ENCODE measurements at regions of chr2 and their contacts with region 1.

Region 1: DNA sequence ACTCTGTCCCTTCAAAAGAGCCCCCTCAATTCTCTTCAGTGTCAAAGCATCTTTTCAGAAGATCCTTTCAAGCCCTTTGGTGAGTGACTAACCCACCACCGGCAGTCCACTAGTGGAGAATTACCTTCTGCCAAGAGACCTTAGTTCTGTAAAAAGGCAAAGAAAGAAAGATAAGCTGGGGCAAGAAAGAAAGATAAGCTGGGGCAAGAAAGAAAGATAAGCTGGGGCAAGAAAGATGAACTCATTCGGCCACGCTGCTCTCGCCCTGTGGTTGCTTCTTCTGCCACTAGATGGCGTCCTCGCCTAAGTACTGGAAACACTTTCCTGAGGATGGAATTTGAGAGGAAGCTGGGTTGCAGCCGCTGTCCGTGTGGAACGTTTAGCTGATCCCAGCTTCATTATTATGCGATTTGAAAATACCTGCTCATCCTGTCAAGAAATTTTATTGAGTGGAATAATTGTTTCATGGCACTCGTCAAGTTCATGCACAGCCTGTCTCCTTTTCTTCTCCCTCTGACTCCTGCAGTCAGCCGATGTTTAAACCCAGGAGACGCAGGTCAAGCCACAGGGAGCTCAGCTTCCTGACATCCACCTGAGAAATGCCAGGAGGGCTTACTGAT is 17.3 kb upstream of the ANXA4 start:
- DNase-seq: peak; percentile 83
- H3K4me3 ChIP-seq: peak overlapping the region; percentile 18
- H3K27ac ChIP-seq: no peak overlapping the region
- H3K4me1 ChIP-seq: no peaks in the 10 kb centered on the region
- H3K27me3 ChIP-seq: no peaks in the 10 kb centered on the region
- CTCF ChIP-seq: peak; percentile 88

Region 2: GRCh38 chr2:69741619-69742466 is 17.2 kb after region 1 on chr2 and contains the start of gene ANXA4:
- CTCF ChIA-PET with region 1: interaction called, 11 read pairs
- POLR2A ChIA-PET with region 1: no interaction called
- intact Hi-C with region 1: no loop called
- DNase-seq: peak; percentile 56
- H3K4me3 ChIP-seq: peak within 1 kb of the TSS; percentile 54
- H3K27ac ChIP-seq: peak within 1 kb of the TSS; percentile 51
- H3K4me1 ChIP-seq: peaks cover 3% of the 10 kb centered on the region
- H3K27me3 ChIP-seq: no peaks in the 10 kb centered on the region
- CTCF ChIP-seq: no peak
- total RNA-seq, gene ANXA4: 5.1 and 6.5 TPM in 2 replicates

Region 3: DNA sequence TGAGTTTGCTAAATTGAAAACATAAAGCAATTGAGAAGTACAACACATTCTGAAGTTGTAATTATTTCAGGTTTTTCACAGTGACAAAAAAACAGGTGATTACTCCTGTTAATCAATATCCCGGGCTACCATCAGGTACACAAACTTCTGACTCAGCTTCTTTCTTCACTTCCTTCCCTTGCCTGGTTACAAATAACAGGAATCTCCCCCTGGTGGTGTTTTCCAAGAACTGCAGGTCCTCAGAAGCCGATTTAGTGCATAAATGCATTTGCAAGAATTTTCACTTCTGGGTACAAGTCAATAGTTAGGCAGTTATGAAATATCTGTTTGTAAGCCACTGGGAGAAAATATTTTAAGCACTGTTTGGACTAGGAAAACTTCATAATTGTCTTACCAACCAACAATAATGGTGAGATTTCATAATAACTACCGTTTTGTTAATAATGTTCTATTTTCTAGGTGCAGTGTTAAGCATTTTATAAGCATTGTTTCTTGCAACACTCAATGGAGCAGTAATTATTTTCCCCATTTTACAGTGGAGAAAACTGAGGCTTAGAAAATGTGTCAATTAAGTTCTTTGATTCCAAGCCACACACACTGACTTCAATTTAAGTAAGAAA is 92.4 kb after region 1 on chr2:
- CTCF ChIA-PET with region 1: interaction called, 108 read pairs
- POLR2A ChIA-PET with region 1: interaction called, 3 read pairs
- intact Hi-C with region 1: loop called (anchors 1 kb)
- DNase-seq: peak; percentile 90
- H3K4me3 ChIP-seq: no peak overlapping the region
- H3K27ac ChIP-seq: no peak overlapping the region
- H3K4me1 ChIP-seq: peaks cover 6% of the 10 kb centered on the region
- H3K27me3 ChIP-seq: no peaks in the 10 kb centered on the region
- CTCF ChIP-seq: peak; percentile 85

Region 4: GRCh38 chr2:69837533-69837932 is 112.9 kb after region 1 on chr2:
- CTCF ChIA-PET with region 1: no interaction called
- POLR2A ChIA-PET with region 1: no interaction called
- intact Hi-C with region 1: no loop called
- DNase-seq: no peak
- H3K4me3 ChIP-seq: no peak overlapping the region
- H3K27ac ChIP-seq: no peak overlapping the region
- H3K4me1 ChIP-seq: no peaks in the 10 kb centered on the region
- H3K27me3 ChIP-seq: no peaks in the 10 kb centered on the region
- CTCF ChIP-seq: no peak

Region 5: GRCh38 chr2:69893684-69894551 is 169.3 kb after region 1 on chr2 and contains the start of gene SNRNP27:
- CTCF ChIA-PET with region 1: interaction called, 10 read pairs
- POLR2A ChIA-PET with region 1: interaction called, 8 read pairs
- intact Hi-C with region 1: loop called (anchors 10 kb)
- DNase-seq: peak; percentile 93
- H3K4me3 ChIP-seq: peak within 1 kb of the TSS; percentile 69
- H3K27ac ChIP-seq: peak within 1 kb of the TSS; percentile 82
- H3K4me1 ChIP-seq: no peaks in the 10 kb centered on the region
- H3K27me3 ChIP-seq: no peaks in the 10 kb centered on the region
- CTCF ChIP-seq: no peak
- total RNA-seq, gene SNRNP27: 72.5 and 76.3 TPM in 2 replicates